A549 (cell line): ENCODE measurements at regions of chrX and their contacts with region 1.

Region 1: GRCh38 chrX:131621650-131622049 is 77.8 kb downstream of the OR13H1 start:
- DNase-seq: no peak
- ATAC-seq: no peak
- H3K4me3 ChIP-seq: no peak overlapping the region
- H3K27ac ChIP-seq: no peak overlapping the region
- H3K4me1 ChIP-seq: no peaks in the 10 kb centered on the region
- CTCF ChIP-seq: no peak
- EP300 ChIP-seq: no peak
- POLR2A ChIP-seq: no peak
- RAD21 ChIP-seq: no peak

Region 2: DNA sequence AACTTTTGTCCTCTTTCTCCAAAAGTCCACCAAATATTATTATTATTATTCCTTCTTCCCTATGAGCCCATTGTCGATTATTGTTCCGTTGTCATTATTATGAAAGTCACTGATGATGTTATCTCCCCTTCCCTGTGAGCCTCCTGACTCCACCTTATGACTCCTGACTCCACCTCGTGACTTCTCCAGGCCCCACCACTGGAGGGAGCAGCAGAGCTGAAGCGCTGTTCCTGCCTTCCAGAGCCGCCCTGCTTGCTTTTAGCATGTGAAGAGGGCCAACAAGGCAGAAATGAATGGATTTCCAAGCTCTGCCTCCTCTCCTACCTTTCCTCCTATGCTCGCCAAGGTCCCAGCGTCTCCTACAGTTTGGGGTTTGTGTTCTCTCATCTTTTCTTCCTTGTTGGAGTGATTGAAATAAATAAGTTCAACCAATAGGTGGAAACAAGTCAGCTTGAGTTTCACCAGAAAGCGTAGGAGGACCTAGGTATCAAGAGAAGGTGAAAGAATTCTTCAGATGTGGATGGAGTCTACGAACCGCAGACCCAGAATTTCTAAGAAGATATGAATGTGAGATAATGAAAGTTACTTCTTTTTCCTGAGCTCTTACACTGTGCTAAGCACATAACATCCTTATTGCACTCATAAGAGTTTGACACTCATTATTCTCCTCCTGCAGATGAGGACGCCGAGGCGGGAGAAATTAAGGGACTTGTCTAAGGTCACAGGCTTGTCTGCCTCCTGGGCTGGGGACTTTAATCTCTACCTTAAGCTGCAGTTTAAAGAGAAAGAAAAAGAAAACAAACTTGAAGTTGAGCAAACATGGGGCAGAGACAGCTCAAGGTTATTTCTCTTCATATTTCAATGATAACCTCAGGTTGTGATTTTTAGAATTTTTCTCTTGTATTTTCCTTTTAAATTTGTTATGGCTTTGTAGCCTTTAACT is 358.6 kb before region 1 on chrX:
- CTCF ChIA-PET with region 1: interaction called, 22 read pairs
- POLR2A ChIA-PET with region 1: no interaction called
- DNase-seq: peak; percentile 37 to 51
- ATAC-seq: peak; percentile 85 to 93
- H3K4me3 ChIP-seq: no peak overlapping the region
- H3K27ac ChIP-seq: no peak overlapping the region
- H3K4me1 ChIP-seq: no peaks in the 10 kb centered on the region
- CTCF ChIP-seq: peak; percentile 59
- EP300 ChIP-seq: no peak
- POLR2A ChIP-seq: no peak
- RAD21 ChIP-seq: peak; percentile 64 to 65

Region 3: DNA sequence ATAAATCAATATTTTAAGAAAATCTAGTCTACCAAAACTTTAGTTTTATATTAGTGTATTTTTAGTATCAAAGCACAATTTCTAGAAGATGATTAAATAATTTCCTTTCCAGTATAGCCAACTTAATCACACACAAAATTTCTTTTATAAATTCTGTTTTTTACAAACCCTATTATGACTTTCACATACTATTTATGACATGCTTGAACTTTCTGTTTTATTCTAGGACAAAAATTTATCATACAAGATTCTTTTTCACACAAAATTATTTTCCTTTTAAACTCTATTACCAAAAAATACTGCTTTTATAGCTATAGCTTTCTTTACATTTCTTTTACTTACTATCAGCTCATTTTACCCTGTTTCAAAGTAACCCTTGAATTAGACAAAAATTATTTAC is 71.7 kb after region 1 on chrX:
- CTCF ChIA-PET with region 1: no interaction called
- POLR2A ChIA-PET with region 1: no interaction called
- DNase-seq: no peak
- ATAC-seq: no peak
- H3K4me3 ChIP-seq: no peak overlapping the region
- H3K27ac ChIP-seq: no peak overlapping the region
- H3K4me1 ChIP-seq: no peaks in the 10 kb centered on the region
- CTCF ChIP-seq: no peak
- EP300 ChIP-seq: no peak
- POLR2A ChIP-seq: no peak
- RAD21 ChIP-seq: no peak